Gastrocnemius medialis (tissue), 4 donors: ENCODE measurements at regions of chr1 and their contacts with region 1.

Region 1: DNA sequence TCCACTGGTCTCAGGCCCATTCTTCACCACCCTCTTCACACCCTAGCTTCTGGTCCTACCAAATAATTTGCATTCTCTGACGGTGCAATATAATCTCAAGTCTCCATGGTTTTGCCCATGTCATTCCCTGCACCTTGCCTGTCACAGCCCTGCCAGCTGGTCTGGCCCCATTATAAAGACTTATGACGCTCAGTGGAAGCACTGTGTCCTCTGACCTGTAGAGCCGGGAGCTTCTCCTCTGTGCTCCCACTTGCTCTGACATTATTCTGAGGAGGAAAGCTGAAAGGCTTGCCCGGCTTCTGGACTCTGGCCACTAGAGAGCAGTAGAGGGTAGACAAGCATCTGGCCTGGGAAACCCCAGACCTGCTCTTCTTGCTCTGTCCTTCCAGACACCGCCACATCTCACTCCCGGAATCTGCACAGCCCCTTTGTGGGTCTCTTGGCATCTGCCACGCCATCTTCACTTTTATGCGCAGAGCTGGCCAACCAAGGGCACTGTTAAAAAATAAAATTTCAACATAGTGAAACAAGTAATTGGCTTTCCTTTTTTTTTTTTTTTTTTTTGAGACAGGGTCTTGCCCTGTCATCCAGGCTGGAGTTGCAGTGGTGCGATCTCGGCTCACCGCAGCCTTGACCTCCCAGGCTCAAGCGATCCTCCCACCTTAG is 44.4 kb downstream of the NENF start:
- DNase-seq: peak; percentile 66 to 76
- ATAC-seq: peak; percentile 96 to 100
- H3K4me3 ChIP-seq: no peak overlapping the region
- H3K27ac ChIP-seq: no peak overlapping the region
- H3K4me1 ChIP-seq: peaks cover 0 to 4% of the 10 kb centered on the region in 2 donors
- H3K27me3 ChIP-seq: no peaks in the 10 kb centered on the region
- CTCF ChIP-seq: peak; percentile 77 to 91 (median 82)
- POLR2A ChIP-seq: no peak

Region 2: DNA sequence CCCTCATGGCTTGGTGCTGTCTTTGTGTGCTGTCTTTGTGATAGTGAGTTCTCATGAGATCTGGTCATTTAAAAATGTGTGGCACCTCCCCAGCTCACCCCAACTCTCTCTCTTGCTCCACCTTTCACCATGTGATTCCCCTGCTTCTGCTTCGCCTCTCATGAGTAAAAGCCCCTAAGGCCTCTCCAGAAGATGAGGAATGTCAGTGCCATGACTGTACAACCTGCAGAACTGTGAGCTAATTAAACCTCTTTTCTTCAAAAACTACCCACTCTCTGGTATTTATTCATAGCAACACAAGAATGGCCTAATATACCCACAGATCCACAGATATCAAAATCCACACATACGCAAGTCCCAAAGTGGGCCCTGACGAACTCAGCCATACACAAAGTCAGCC is 280.8 kb before region 1 on chr1:
- in situ Hi-C with region 1: no loop called
- intact Hi-C with region 1: no loop called
- DNase-seq: no peak
- ATAC-seq: no peak
- H3K4me3 ChIP-seq: no peak overlapping the region
- H3K27ac ChIP-seq: no peak overlapping the region
- H3K4me1 ChIP-seq: no peaks in the 10 kb centered on the region
- H3K27me3 ChIP-seq: no peaks in the 10 kb centered on the region
- CTCF ChIP-seq: no peak
- POLR2A ChIP-seq: no peak

Region 3: GRCh38 chr1:212558693-212559480 is 81.7 kb after region 1 on chr1:
- in situ Hi-C with region 1: no loop called
- intact Hi-C with region 1: loop called (anchors 2 kb)
- DNase-seq: peak; percentile 76 to 92
- ATAC-seq: peak; percentile 91 to 92
- H3K4me3 ChIP-seq: peak overlapping the region; percentile 65 to 82 (median 76)
- H3K27ac ChIP-seq: peak overlapping the region; percentile 75 to 94 (median 90)
- H3K4me1 ChIP-seq: no peaks in the 10 kb centered on the region
- H3K27me3 ChIP-seq: no peaks in the 10 kb centered on the region
- CTCF ChIP-seq: no peak
- POLR2A ChIP-seq: peak; percentile 80 to 94

Region 4: DNA sequence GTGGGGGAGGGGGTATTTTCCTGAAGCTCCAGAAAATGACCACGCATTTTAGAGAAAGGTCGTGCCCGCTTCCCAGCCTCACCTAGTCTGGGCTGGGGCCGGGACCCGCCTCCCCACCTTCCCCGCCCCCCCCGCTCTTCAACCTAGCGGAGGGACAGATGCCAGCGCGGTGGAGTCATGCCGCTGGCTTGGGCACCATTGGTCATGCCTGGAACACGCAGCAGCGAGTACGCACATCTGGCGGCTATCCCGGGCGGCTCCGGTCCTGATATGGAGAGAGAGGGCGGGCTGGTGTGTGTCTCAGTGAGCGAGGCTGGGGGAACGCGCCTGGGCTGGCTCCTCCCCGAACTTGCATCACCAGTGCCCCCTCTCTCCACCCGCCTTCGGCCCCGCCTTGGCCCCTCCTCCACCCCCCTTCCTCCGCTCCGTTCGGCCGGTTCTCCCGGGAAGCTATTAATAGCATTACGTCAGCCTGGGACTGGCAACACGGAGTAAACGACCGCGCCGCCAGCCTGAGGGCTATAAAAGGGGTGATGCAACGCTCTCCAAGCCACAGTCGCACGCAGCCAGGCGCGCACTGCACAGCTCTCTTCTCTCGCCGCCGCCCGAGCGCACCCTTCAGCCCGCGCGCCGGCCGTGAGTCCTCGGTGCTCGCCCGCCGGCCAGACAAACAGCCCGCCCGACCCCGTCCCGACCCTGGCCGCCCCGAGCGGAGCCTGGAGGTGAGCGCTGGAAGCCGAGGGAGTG is 131.2 kb after region 1 on chr1 and contains the start of gene ATF3:
- in situ Hi-C with region 1: no loop called
- intact Hi-C with region 1: loop called (anchors 5 kb)
- DNase-seq: peak; percentile 100
- ATAC-seq: peak; percentile 81 to 93
- H3K4me3 ChIP-seq: peak within 1 kb of the TSS; percentile 76 to 92 (median 80)
- H3K27ac ChIP-seq: peak within 1 kb of the TSS; percentile 90 to 95 (median 93)
- H3K4me1 ChIP-seq: peaks cover 14 to 22% of the 10 kb centered on the region in 2 donors
- H3K27me3 ChIP-seq: peaks cover 21 to 39% (median 31%) of the 10 kb centered on the region in 3 donors
- CTCF ChIP-seq: no peak
- POLR2A ChIP-seq: peak; percentile 99
- total RNA-seq, gene ATF3: 1.9 to 7.4 (median 7.2) TPM

Region 5: GRCh38 chr1:212630158-212630900 is 153.2 kb after region 1 on chr1:
- in situ Hi-C with region 1: loop called in 2 of 4 experiments (anchors 5 kb)
- intact Hi-C with region 1: loop called (anchors 1 kb)
- DNase-seq: peak; percentile 30 to 47
- ATAC-seq: peak; percentile 68 to 94
- H3K4me3 ChIP-seq: no peak overlapping the region
- H3K27ac ChIP-seq: no peak overlapping the region
- H3K4me1 ChIP-seq: peaks cover 0 to 2% of the 10 kb centered on the region in 2 donors
- H3K27me3 ChIP-seq: peaks cover 0 to 5% (median 4%) of the 10 kb centered on the region in 3 donors
- CTCF ChIP-seq: peak; percentile 72 to 85 (median 77)
- POLR2A ChIP-seq: no peak

Region 6: GRCh38 chr1:212769459-212770167 is 292.5 kb after region 1 on chr1:
- in situ Hi-C with region 1: no loop called
- intact Hi-C with region 1: no loop called
- DNase-seq: no peak
- ATAC-seq: no peak
- H3K4me3 ChIP-seq: no peak overlapping the region
- H3K27ac ChIP-seq: no peak overlapping the region
- H3K4me1 ChIP-seq: no peaks in the 10 kb centered on the region
- H3K27me3 ChIP-seq: no peaks in the 10 kb centered on the region
- CTCF ChIP-seq: no peak
- POLR2A ChIP-seq: no peak

Region 7: GRCh38 chr1:212782422-212783154 is 305.4 kb after region 1 on chr1:
- in situ Hi-C with region 1: no loop called
- intact Hi-C with region 1: loop called (anchors 1 kb)
- DNase-seq: no peak
- ATAC-seq: no peak
- H3K4me3 ChIP-seq: no peak overlapping the region
- H3K27ac ChIP-seq: no peak overlapping the region
- H3K4me1 ChIP-seq: no peaks in the 10 kb centered on the region
- H3K27me3 ChIP-seq: no peaks in the 10 kb centered on the region
- CTCF ChIP-seq: peak in 4 of 5 experiments; percentile 26 to 48 (median 43)
- POLR2A ChIP-seq: no peak